ENCODE measurements at regions of chr14 and their contacts with region 1.

Region 1: DNA sequence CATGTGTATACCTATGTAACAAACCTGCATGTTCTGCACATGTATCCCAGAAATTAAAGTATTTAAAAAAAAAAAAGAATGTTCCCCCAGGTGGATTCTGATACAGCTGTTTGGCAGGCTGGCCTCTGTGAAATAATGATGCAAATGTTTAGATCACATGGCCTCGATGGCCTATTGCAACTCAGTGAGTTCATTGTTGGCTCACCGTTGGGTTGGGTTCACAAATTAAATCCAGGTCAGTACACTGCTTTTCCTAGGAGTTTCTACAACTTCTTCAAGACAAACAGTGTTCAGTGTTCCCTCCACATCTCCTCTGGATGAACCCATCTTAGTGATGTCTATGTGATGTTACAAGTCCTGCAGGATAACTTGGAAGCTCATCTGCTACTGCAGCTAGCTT is 58.3 kb upstream of the STXBP6 start:
- DNase-seq: no peak
- ATAC-seq: no peak
- H3K4me3 ChIP-seq: no peak overlapping the region
- H3K4me3 Mint-ChIP-seq: no peak overlapping the region
- H3K27ac ChIP-seq: no peak overlapping the region
- H3K27ac Mint-ChIP-seq: no peak overlapping the region
- H3K4me1 ChIP-seq: no peaks in the 10 kb centered on the region
- H3K4me1 Mint-ChIP-seq: no peaks in the 10 kb centered on the region
- H3K27me3 ChIP-seq: peaks cover 0 to 7% of the 10 kb centered on the region in 2 experiments
- H3K27me3 Mint-ChIP-seq: peaks cover 7 to 20% of the 10 kb centered on the region in 2 donors

Region 2: DNA sequence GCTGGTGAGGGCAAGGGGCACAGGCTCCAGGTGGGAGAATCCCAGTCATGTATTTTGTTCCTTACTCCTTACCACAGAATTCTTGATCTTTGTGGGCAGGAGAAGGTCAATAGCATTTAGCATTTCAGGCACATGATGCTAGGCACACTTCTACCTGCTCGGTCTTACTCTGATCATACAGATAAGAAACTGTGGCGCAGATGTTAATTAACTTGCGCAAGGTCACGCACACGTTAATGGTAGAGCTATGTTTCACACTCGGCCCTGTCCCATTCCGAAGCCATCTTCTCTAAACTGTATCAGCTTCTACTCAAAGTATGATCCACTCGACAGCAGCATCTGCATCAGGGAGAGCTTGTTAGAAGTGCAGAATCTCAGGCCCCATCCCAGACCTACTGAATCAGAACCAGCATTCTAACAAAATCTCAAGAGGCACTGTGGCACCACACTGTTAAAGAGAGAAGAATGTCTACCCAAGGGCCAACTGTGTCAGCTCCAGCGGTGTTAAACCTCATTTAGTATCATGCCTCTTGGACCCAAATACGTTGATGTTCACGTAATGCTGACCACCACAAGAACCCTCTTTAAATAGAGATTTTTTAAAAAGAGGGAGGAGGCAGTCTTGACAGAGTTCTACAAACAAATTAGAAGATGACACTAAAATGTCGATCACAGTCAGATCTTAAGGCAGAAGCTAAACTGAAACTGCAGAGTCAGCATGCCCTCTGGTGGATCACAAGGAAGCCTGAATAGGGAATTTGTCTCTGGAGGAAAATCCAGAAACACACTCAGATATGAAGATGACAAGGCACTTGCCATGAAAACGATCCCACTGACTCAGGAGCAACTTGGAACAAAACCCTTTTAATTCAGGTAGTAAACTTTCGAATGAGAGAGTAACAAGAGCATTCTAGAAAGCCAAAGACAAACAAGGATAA is 65.7 kb before region 1 on chr14:
- CTCF ChIA-PET with region 1: no interaction called
- POLR2A ChIA-PET with region 1: no interaction called
- DNase-seq: peak in 1 of 35 experiments; percentile 0
- ATAC-seq: no peak
- H3K4me3 ChIP-seq: no peak overlapping the region
- H3K4me3 Mint-ChIP-seq: no peak overlapping the region
- H3K27ac ChIP-seq: no peak overlapping the region
- H3K27ac Mint-ChIP-seq: no peak overlapping the region
- H3K4me1 ChIP-seq: no peaks in the 10 kb centered on the region
- H3K4me1 Mint-ChIP-seq: no peaks in the 10 kb centered on the region
- H3K27me3 ChIP-seq: peaks cover 3 to 6% of the 10 kb centered on the region in 2 experiments
- H3K27me3 Mint-ChIP-seq: peaks cover 22 to 26% of the 10 kb centered on the region in 2 donors

Region 3: GRCh38 chr14:25121337-25122122 is 13.2 kb after region 1 on chr14:
- CTCF ChIA-PET with region 1: no interaction called
- POLR2A ChIA-PET with region 1: no interaction called
- DNase-seq: no peak
- ATAC-seq: no peak
- H3K4me3 ChIP-seq: no peak overlapping the region
- H3K4me3 Mint-ChIP-seq: no peak overlapping the region
- H3K27ac ChIP-seq: no peak overlapping the region
- H3K27ac Mint-ChIP-seq: no peak overlapping the region
- H3K4me1 ChIP-seq: no peaks in the 10 kb centered on the region
- H3K4me1 Mint-ChIP-seq: no peaks in the 10 kb centered on the region
- H3K27me3 ChIP-seq: no peaks in the 10 kb centered on the region
- H3K27me3 Mint-ChIP-seq: peaks cover 2 to 10% of the 10 kb centered on the region in 2 donors

Region 4: GRCh38 chr14:25150934-25151790 is 42.9 kb after region 1 on chr14:
- CTCF ChIA-PET with region 1: interaction called in 1 of 2 experiments, 14 read pairs
- POLR2A ChIA-PET with region 1: no interaction called
- DNase-seq: peak in 1 of 35 experiments; percentile 39
- ATAC-seq: no peak
- H3K4me3 ChIP-seq: no peak overlapping the region
- H3K4me3 Mint-ChIP-seq: no peak overlapping the region
- H3K27ac ChIP-seq: no peak overlapping the region
- H3K27ac Mint-ChIP-seq: no peak overlapping the region
- H3K4me1 ChIP-seq: no peaks in the 10 kb centered on the region
- H3K4me1 Mint-ChIP-seq: no peaks in the 10 kb centered on the region
- H3K27me3 ChIP-seq: peaks cover 0 to 2% of the 10 kb centered on the region in 2 experiments
- H3K27me3 Mint-ChIP-seq: peaks cover 9 to 19% of the 10 kb centered on the region in 2 donors

Measured in T-cell (primary cell).